Natural killer cell (primary cell): ENCODE measurements at regions of chr10 and their contacts with region 1.

Region 1: DNA sequence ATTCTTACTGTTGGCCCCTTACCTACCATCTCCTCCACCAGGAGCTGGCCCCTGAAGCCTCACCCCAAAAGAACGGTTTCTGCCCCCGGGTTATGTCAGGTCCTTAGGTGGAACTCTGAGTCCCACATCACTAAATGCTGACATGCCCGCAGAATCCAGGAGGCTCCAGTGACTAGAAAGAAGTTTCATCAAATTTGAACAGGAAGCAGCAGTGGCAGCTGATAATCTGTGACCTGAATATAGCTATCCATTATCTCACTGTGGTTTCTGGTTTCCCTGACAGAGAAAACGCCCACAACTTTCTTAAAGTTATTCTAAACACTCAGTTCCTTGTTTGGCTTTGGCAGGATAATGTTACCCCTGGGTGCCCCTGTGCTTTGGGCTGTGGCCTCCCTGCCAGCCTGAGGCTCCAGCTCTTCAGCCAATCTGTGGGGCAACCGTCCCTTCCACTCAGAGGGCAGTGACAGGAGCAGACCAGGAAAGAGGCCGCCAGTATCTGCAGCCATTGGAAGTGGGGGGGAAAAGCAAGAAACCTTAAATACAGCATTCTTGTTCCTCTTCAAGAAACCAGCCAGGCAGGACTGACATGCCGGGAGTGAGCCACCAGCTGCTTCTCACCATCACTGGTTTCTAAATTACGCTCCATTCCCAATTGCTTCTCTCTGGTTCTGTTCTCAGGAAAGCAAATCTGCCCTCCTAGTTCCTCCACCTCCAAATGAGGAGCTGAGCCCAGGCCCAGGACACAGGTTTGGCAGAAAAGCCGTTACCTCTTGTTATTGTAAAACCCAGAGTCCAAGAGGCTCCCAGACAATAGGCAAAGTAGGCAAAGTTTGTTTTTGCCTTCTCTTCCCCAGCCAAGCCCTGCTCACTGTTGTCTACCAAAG is 41.2 kb upstream of the VCL start:
- DNase-seq: peak; percentile 35 to 71
- ATAC-seq: peak; percentile 64 to 80 (median 76)
- H3K4me3 ChIP-seq: peak overlapping the region; percentile 10
- H3K4me3 Mint-ChIP-seq: peak overlapping the region; percentile 91
- H3K27ac ChIP-seq: peak overlapping the region; percentile 78
- H3K27ac Mint-ChIP-seq: peak overlapping the region; percentile 92 to 94
- H3K4me1 ChIP-seq: peaks cover 57% of the 10 kb centered on the region
- H3K4me1 Mint-ChIP-seq: peaks cover 59 to 73% of the 10 kb centered on the region in 2 donors
- H3K27me3 ChIP-seq: no peaks in the 10 kb centered on the region
- H3K27me3 Mint-ChIP-seq: no peaks in the 10 kb centered on the region
- CTCF ChIP-seq: no peak

Region 2: GRCh38 chr10:73209705-73210104 is 747.0 kb before region 1 on chr10:
- intact Hi-C with region 1: no loop called
- DNase-seq: no peak
- ATAC-seq: no peak
- H3K4me3 ChIP-seq: no peak overlapping the region
- H3K4me3 Mint-ChIP-seq: no peak overlapping the region
- H3K27ac ChIP-seq: no peak overlapping the region
- H3K27ac Mint-ChIP-seq: no peak overlapping the region
- H3K4me1 ChIP-seq: no peaks in the 10 kb centered on the region
- H3K4me1 Mint-ChIP-seq: no peaks in the 10 kb centered on the region
- H3K27me3 ChIP-seq: no peaks in the 10 kb centered on the region
- H3K27me3 Mint-ChIP-seq: no peaks in the 10 kb centered on the region
- CTCF ChIP-seq: no peak

Region 3: DNA sequence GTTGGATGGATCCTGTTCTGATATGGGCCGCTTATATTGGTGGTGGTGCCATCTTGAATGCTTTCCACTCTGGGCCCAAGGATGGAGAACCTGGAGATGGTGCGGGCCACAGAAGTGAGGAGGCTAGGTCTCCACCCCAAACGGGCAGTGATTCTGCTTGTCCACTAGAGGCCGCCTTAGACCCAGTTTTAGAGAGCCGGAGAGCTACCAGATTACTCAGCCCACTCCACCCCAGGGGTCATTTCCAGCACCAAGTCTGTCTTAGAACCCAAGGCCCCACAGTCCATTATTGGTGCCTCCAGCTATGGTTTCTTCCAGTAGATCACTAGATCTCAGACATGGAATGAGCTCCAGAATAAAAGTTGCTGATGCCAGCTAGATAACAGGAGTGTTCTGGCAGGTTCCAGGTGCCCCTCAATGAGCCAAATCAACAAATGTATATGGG is 70.6 kb before region 1 on chr10:
- intact Hi-C with region 1: loop called (anchors 5 kb)
- DNase-seq: peak; percentile 65 to 85
- ATAC-seq: peak; percentile 91 to 99 (median 99)
- H3K4me3 ChIP-seq: no peak overlapping the region
- H3K4me3 Mint-ChIP-seq: no peak overlapping the region
- H3K27ac ChIP-seq: no peak overlapping the region
- H3K27ac Mint-ChIP-seq: no peak overlapping the region
- H3K4me1 ChIP-seq: peaks cover 6% of the 10 kb centered on the region
- H3K4me1 Mint-ChIP-seq: peaks cover 7 to 11% of the 10 kb centered on the region in 2 donors
- H3K27me3 ChIP-seq: no peaks in the 10 kb centered on the region
- H3K27me3 Mint-ChIP-seq: no peaks in the 10 kb centered on the region
- CTCF ChIP-seq: peak; percentile 87

Region 4: DNA sequence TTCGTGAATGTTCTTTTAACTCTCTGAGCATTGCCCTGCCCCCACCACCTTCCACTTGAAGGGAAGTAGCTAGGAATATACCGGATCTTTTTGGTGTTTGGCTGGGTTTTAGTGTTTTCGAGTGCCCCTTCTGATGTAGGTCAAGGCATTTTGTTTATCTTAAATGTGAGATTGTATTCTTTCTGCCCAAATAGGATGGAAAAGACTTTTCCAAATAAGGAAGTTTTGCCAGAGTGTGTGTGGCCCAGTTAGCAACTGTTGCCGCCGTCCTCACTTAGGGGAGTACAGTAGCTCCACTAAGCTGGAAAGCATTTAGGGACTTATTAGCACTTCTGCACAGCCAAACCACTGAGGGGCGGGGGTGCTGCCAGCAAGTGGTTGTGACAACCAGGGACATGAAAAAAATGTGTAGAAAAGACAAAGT is 11.4 kb after region 1 on chr10:
- intact Hi-C with region 1: loop called (anchors 1 kb)
- DNase-seq: peak; percentile 55 to 65
- ATAC-seq: peak; percentile 92 to 96 (median 92)
- H3K4me3 ChIP-seq: no peak overlapping the region
- H3K4me3 Mint-ChIP-seq: peak overlapping the region; percentile 71
- H3K27ac ChIP-seq: peak overlapping the region; percentile 37
- H3K27ac Mint-ChIP-seq: peak overlapping the region; percentile 59 to 86
- H3K4me1 ChIP-seq: peaks cover 37% of the 10 kb centered on the region
- H3K4me1 Mint-ChIP-seq: peaks cover 27 to 41% of the 10 kb centered on the region in 2 donors
- H3K27me3 ChIP-seq: no peaks in the 10 kb centered on the region
- H3K27me3 Mint-ChIP-seq: no peaks in the 10 kb centered on the region
- CTCF ChIP-seq: no peak

Region 5: DNA sequence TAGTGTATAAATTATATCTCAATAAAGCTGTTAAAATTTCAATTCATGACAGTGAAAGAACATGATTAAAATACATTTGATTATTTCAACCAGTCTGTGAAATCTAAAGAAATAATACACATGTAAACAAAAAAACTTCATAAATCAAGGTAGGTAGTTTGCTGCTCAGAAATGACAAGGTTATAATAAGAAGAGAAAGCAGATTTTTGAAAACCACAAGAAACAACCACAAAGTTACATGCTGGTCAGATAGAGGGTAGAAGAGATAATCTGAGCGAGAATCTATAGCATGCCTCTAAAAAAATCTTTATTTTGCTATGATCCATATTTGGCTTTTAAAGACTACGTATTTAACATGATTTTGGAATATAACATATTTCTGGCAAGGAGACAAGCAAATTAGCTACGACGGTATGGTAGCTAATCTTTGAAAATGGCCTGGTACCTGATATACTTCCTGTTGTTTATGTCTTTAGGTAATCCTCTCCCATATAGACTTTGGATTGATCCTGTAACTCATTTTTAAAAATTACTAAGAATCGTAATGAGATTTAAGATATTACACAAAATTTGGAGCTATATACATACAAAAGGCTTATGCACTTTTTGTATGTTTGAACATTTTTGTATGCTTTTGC is 17.7 kb after region 1 on chr10:
- intact Hi-C with region 1: loop called (anchors 2 kb)
- DNase-seq: peak in 1 of 2 donors; percentile 48
- ATAC-seq: peak; percentile 60 to 78 (median 68)
- H3K4me3 ChIP-seq: peak overlapping the region; percentile 5
- H3K4me3 Mint-ChIP-seq: peak overlapping the region; percentile 71
- H3K27ac ChIP-seq: peak overlapping the region; percentile 6
- H3K27ac Mint-ChIP-seq: peak overlapping the region; percentile 43 to 53
- H3K4me1 ChIP-seq: peaks cover 16% of the 10 kb centered on the region
- H3K4me1 Mint-ChIP-seq: peaks cover 23 to 33% of the 10 kb centered on the region in 2 donors
- H3K27me3 ChIP-seq: no peaks in the 10 kb centered on the region
- H3K27me3 Mint-ChIP-seq: no peaks in the 10 kb centered on the region
- CTCF ChIP-seq: no peak

Region 6: DNA sequence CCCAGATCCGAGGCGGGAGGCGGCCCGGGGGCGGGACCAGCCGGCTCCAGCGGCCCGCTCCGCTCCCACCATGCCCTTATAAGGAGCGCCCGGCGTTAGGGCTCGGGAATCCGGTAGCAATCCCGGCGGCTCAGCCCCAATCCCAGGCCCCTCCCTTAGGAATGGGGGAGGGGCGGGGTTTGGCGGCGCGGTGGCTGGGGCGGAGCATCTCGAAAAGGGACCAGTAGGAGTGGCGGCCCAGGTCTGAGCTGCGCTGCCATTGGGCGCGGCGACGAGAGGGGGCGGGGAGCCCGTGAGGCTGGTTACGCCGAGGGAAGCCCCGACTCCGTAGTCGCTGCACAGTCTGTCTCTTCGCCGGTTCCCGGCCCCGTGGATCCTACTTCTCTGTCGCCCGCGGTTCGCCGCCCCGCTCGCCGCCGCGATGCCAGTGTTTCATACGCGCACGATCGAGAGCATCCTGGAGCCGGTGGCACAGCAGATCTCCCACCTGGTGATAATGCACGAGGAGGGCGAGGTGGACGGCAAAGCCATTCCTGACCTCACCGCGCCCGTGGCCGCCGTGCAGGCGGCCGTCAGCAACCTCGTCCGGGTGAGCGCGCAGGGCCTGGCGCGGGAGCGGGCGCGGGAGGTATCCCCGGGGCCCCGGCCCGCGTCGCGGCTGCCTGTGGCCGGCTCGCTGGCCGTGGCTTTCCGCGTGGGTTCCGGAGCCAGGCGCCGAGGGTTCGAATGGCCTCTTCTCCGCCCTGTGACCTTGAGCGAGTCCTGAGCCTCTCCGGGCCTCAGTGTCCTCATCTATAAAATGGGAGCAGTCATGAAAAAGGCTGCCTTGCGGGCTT is 41.3 kb after region 1 on chr10 and contains the start of gene VCL:
- intact Hi-C with region 1: loop called (anchors 2 kb)
- DNase-seq: peak; percentile 95 to 97
- ATAC-seq: peak; percentile 93 to 99 (median 96)
- H3K4me3 ChIP-seq: peak within 1 kb of the TSS; percentile 78
- H3K4me3 Mint-ChIP-seq: peak within 1 kb of the TSS; percentile 97
- H3K27ac ChIP-seq: peak within 1 kb of the TSS; percentile 70
- H3K27ac Mint-ChIP-seq: peak within 1 kb of the TSS; percentile 88 to 94
- H3K4me1 ChIP-seq: peaks cover 23% of the 10 kb centered on the region
- H3K4me1 Mint-ChIP-seq: peaks cover 51 to 68% of the 10 kb centered on the region in 2 donors
- H3K27me3 ChIP-seq: no peaks in the 10 kb centered on the region
- H3K27me3 Mint-ChIP-seq: no peaks in the 10 kb centered on the region
- CTCF ChIP-seq: no peak
- total RNA-seq, gene VCL: 121 to 145 (median 122) TPM

Region 7: GRCh38 chr10:74081192-74081803 is 124.6 kb after region 1 on chr10:
- intact Hi-C with region 1: loop called (anchors 5 kb)
- DNase-seq: peak in 1 of 2 donors; percentile 72
- ATAC-seq: peak in 2 of 3 donors; percentile 49 to 60
- H3K4me3 ChIP-seq: no peak overlapping the region
- H3K4me3 Mint-ChIP-seq: no peak overlapping the region
- H3K27ac ChIP-seq: no peak overlapping the region
- H3K27ac Mint-ChIP-seq: peak overlapping the region; percentile 24 to 71
- H3K4me1 ChIP-seq: peaks cover 9% of the 10 kb centered on the region
- H3K4me1 Mint-ChIP-seq: peaks cover 55 to 65% of the 10 kb centered on the region in 2 donors
- H3K27me3 ChIP-seq: no peaks in the 10 kb centered on the region
- H3K27me3 Mint-ChIP-seq: no peaks in the 10 kb centered on the region
- CTCF ChIP-seq: peak; percentile 47